ENCODE measurements at regions of chr2 and their contacts with region 1.

Region 1: DNA sequence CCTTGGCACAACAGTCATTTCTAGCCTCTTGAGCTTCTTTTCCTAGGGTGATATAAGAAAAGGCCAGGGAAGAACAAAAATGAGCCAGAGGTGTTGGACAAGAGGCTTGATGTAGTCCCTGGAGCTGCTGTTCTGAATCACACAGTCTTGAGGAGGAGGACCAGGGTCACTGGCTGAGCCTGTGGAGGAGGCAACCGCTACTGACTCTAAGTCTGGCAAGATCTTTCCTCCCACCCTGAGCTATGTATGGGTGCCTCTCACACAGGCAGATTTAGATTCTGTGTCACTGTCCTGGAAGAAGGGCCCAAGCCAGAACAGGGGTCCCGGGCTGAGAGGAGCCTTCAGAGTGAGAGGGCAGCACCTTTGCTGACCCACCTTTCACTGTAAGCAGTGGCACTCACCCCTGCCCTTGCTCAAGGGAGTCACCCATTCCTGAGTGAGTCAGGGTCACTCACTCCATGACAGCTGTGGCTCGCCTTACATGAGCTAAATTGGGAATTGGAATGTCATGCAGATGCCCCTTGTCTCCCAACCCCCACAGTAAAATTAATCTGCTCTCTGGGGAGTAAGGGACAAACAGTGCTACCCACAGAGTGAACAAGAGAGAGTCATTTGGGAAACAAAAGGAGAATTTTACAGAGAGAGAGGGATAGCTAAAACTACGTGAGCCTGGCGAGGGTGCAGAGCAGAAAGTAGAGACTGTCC is at the start of gene TRIM54:
- DNase-seq: no peak
- ATAC-seq: peak; percentile 60
- H3K4me3 ChIP-seq: peak within 1 kb of the TSS in 1 of 3 experiments; percentile 26; a peak in 2 of 6 replicates
- H3K27ac ChIP-seq: no peak within 1 kb of the TSS
- H3K4me1 ChIP-seq: peaks cover 41% of the 10 kb centered on the region
- H3K27me3 ChIP-seq: peaks cover 0 to 18% of the 10 kb centered on the region in 2 experiments; a peak in 4 of 5 replicates
- CTCF ChIP-seq: no peak
- EP300 ChIP-seq: no peak
- POLR2A ChIP-seq: no peak
- RAD21 ChIP-seq: no peak
- total RNA-seq, gene TRIM54: 0.07 TPM in 1 of 2 replicates, not detected in the other

Region 2: DNA sequence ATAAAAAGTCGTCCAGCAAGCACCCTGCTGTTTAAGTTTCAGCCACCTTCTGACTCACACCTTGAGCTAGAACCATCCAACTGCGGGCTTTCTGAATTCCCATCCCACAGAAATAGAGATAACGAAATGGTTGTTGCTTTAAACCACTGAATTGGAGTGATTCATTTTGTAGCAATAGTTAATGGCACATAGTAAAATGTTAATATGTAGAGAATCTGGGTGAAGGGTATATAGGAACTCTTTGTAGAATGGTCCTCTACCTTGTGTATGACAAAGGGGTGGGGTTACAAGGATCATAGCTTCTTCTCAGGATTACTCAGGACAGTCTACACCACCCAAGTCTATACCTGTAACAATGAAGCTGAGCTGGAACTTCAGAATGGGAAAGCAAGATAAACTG is 314.0 kb before region 1 on chr2:
- CTCF ChIA-PET with region 1: no interaction called
- POLR2A ChIA-PET with region 1: no interaction called
- in situ Hi-C with region 1: loop called (anchors 10 kb)
- intact Hi-C with region 1: no loop called
- DNase-seq: no peak
- ATAC-seq: no peak
- H3K4me3 ChIP-seq: no peak overlapping the region
- H3K27ac ChIP-seq: no peak overlapping the region
- H3K4me1 ChIP-seq: peaks cover 13% of the 10 kb centered on the region
- H3K27me3 ChIP-seq: peaks cover 0 to 41% of the 10 kb centered on the region in 2 experiments; a peak in 4 of 5 replicates
- CTCF ChIP-seq: no peak
- EP300 ChIP-seq: no peak
- POLR2A ChIP-seq: no peak
- RAD21 ChIP-seq: no peak

Region 3: DNA sequence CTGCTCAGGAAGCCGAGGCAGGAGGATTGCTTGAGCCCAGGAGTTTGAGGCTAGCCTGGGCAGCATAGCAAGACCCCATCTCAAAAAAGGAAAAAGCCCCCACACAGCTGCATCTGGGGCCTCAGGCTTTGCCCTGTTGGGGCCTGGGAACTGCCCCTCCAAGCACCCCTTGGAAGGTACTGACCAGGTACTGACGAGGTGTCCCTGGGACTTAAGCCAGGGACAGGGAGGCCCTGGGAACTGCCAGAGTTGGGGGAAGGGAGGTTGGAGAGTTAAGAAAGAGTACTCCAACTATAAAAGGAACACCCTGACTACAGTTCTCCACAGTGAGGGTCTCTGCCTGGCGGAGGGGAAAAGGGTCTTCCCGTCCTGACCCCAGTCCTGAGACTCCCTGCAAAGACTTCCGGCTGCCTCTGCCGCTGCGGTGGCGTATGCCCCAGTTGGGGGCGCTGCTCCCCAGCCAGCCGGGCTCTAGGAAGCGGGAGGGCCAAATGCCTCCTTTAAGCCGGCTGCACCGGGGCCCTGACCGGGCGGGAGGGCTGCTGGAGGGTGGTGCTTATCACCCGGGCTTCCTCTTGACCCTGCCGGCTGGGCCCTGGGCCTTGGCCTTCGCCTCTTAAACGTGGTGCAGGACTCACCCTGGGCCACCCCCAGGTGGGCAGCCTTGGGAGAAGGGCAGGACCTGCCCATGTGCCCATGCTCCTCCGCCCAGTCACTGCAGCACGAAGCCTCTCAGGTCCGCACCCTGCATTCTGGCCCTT is 31.9 kb before region 1 on chr2:
- CTCF ChIA-PET with region 1: interaction called, 22 read pairs
- POLR2A ChIA-PET with region 1: no interaction called
- in situ Hi-C with region 1: no loop called
- intact Hi-C with region 1: loop called (anchors 1 kb)
- DNase-seq: peak; percentile 68
- ATAC-seq: peak; percentile 87
- H3K4me3 ChIP-seq: peak overlapping the region; percentile 30 to 70 (median 31)
- H3K27ac ChIP-seq: no peak overlapping the region
- H3K4me1 ChIP-seq: peaks cover 25% of the 10 kb centered on the region
- H3K27me3 ChIP-seq: peaks cover 0 to 13% of the 10 kb centered on the region in 2 experiments; a peak in 3 of 5 replicates
- CTCF ChIP-seq: peak; percentile 99
- EP300 ChIP-seq: no peak
- POLR2A ChIP-seq: 0 out of 4 replicates have a peak, but pooled peaks of 1 of the 2 experiments have one; percentile 22
- RAD21 ChIP-seq: peak; percentile 97

Region 4: GRCh38 chr2:27264753-27265535 is 17.1 kb before region 1 on chr2:
- CTCF ChIA-PET with region 1: interaction called, 29 read pairs
- POLR2A ChIA-PET with region 1: no interaction called
- in situ Hi-C with region 1: no loop called
- intact Hi-C with region 1: loop called (anchors 2 kb)
- DNase-seq: peak; percentile 73
- ATAC-seq: peak; percentile 79
- H3K4me3 ChIP-seq: peak overlapping the region; percentile 56 to 77 (median 58)
- H3K27ac ChIP-seq: no peak overlapping the region
- H3K4me1 ChIP-seq: peaks cover 26% of the 10 kb centered on the region
- H3K27me3 ChIP-seq: peaks cover 19 to 79% of the 10 kb centered on the region in 2 experiments
- CTCF ChIP-seq: peak; percentile 90
- EP300 ChIP-seq: 0 out of 4 replicates have a peak, but pooled peaks of 1 of the 2 experiments have one; percentile 22
- POLR2A ChIP-seq: no peak
- RAD21 ChIP-seq: peak; percentile 88

Measured in HepG2 (cell line).